MCF 10A (cell line): ENCODE measurements at regions of chr12 and their contacts with region 1.

Region 1: GRCh38 chr12:6851921-6852650 is at the start of gene USP5:
- DNase-seq: peak; percentile 100
- H3K4me3 Mint-ChIP-seq: peak within 1 kb of the TSS; percentile 88
- H3K27ac Mint-ChIP-seq: peak within 1 kb of the TSS; percentile 90
- H3K4me1 Mint-ChIP-seq: peaks cover 31% of the 10 kb centered on the region
- H3K27me3 Mint-ChIP-seq: no peaks in the 10 kb centered on the region
- CTCF ChIP-seq: no peak
- total RNA-seq, gene USP5: 62.5 and 80.2 TPM in 2 replicates

Region 2: GRCh38 chr12:6676962-6677361 is 175.1 kb before region 1 on chr12:
- CTCF ChIA-PET with region 1: no interaction called
- POLR2A ChIA-PET with region 1: no interaction called
- intact Hi-C with region 1: no loop called
- DNase-seq: no peak
- H3K4me3 Mint-ChIP-seq: no peak overlapping the region
- H3K27ac Mint-ChIP-seq: no peak overlapping the region
- H3K4me1 Mint-ChIP-seq: no peaks in the 10 kb centered on the region
- H3K27me3 Mint-ChIP-seq: no peaks in the 10 kb centered on the region
- CTCF ChIP-seq: no peak

Region 3: DNA sequence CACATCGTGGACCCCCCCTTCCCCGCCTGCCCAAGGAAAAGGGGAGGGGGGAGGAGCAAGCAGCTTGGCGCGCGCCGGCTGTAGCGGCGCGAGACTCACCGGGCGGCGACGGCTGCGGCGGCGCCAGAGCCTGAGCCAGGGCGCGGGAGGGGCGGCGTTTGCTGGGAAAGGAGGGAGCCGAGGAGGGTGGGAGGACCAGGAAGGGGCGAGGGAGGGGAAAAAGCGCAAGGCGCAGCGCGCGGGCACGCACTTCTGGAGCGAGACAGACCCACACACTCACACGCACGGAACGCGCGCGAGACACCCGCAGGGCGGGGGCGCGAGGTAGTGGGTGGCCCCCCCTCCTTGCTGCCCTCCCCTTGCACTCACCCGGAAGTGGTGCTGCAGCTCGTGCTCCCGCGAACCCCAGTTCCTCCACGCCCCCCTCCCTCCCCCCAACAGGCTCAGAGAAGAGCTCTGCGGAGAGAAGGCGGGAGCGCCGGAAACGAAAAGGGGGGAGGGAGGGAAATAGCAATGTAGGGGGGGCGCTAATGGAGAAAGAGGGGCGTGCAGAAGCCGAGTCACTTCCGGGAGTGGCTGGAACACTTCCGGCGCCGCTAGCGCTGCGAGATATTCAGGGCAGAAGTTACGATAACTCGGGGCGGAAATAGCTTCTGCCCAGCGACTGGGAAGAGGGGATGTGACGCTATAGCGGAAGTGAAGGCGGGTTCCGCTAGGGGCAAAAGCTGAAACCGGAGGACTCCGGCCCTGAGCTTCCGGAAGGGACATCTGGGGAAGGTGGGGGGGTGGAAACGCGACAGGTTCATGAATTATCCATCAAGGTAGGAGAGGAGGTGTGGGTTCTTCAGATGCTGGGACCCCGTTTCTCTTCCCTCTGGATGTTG is 162.8 kb before region 1 on chr12 and contains the start of gene ZNF384:
- CTCF ChIA-PET with region 1: no interaction called
- POLR2A ChIA-PET with region 1: interaction called, 25 read pairs
- intact Hi-C with region 1: no loop called
- DNase-seq: peak; percentile 99
- H3K4me3 Mint-ChIP-seq: peak within 1 kb of the TSS; percentile 98
- H3K27ac Mint-ChIP-seq: peak within 1 kb of the TSS; percentile 99
- H3K4me1 Mint-ChIP-seq: peaks cover 22% of the 10 kb centered on the region
- H3K27me3 Mint-ChIP-seq: peaks cover 3% of the 10 kb centered on the region
- CTCF ChIP-seq: no peak
- total RNA-seq, gene ZNF384: 62.8 and 70.8 TPM in 2 replicates

Region 4: GRCh38 chr12:6699989-6700645 is 152.0 kb before region 1 on chr12:
- CTCF ChIA-PET with region 1: no interaction called
- POLR2A ChIA-PET with region 1: no interaction called
- intact Hi-C with region 1: no loop called
- DNase-seq: no peak
- H3K4me3 Mint-ChIP-seq: peak overlapping the region; percentile 57
- H3K27ac Mint-ChIP-seq: no peak overlapping the region
- H3K4me1 Mint-ChIP-seq: peaks cover 8% of the 10 kb centered on the region
- H3K27me3 Mint-ChIP-seq: peaks cover 72% of the 10 kb centered on the region
- CTCF ChIP-seq: no peak

Region 5: GRCh38 chr12:6764011-6764828 is 87.9 kb before region 1 on chr12:
- CTCF ChIA-PET with region 1: interaction called, 6 read pairs
- POLR2A ChIA-PET with region 1: interaction called, 10 read pairs
- intact Hi-C with region 1: no loop called
- DNase-seq: peak; percentile 99
- H3K4me3 Mint-ChIP-seq: peak overlapping the region; percentile 84
- H3K27ac Mint-ChIP-seq: peak overlapping the region; percentile 95
- H3K4me1 Mint-ChIP-seq: peaks cover 42% of the 10 kb centered on the region
- H3K27me3 Mint-ChIP-seq: no peaks in the 10 kb centered on the region
- CTCF ChIP-seq: no peak

Region 6: GRCh38 chr12:6807170-6807569 is 44.9 kb before region 1 on chr12:
- CTCF ChIA-PET with region 1: no interaction called
- POLR2A ChIA-PET with region 1: no interaction called
- intact Hi-C with region 1: no loop called
- DNase-seq: no peak
- H3K4me3 Mint-ChIP-seq: no peak overlapping the region
- H3K27ac Mint-ChIP-seq: no peak overlapping the region
- H3K4me1 Mint-ChIP-seq: no peaks in the 10 kb centered on the region
- H3K27me3 Mint-ChIP-seq: peaks cover 25% of the 10 kb centered on the region
- CTCF ChIP-seq: no peak

Region 7: DNA sequence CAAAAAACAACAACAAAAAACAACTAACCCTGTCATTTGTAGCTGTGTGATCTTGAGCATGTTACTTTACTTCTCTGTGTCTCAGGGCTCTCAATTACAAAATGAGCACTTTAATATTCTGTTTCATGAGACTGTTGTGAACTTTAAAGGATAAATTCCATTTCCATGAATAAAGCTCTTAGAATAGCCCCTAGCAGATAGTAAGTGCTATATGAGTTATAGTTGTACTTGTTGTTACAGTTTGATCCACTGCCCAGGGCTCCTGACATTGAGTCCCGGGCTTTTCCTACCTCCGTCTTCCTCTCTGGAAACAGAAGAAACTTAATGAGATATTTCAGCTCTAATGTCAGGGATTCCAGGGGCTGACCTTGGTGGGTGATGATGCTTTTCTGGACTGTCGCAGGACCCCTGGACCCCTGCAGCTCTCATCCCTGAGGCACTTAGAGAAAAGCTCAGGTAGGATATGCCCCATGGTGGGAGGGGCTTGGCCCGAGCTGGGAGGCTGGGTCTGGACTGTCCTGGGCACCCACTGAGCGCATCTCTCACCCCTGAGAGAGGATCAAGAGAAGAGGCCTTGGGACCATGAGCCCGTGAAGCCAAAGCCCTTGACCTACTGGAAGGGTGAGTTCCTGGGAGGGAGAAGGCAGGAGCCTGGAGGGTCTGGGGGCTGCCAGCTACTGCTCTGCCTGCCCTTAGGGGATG is 18.7 kb before region 1 on chr12:
- CTCF ChIA-PET with region 1: interaction called, 40 read pairs
- POLR2A ChIA-PET with region 1: interaction called, 9 read pairs
- intact Hi-C with region 1: no loop called
- DNase-seq: no peak
- H3K4me3 Mint-ChIP-seq: no peak overlapping the region
- H3K27ac Mint-ChIP-seq: no peak overlapping the region
- H3K4me1 Mint-ChIP-seq: peaks cover 7% of the 10 kb centered on the region
- H3K27me3 Mint-ChIP-seq: peaks cover 37% of the 10 kb centered on the region
- CTCF ChIP-seq: no peak

Region 8: DNA sequence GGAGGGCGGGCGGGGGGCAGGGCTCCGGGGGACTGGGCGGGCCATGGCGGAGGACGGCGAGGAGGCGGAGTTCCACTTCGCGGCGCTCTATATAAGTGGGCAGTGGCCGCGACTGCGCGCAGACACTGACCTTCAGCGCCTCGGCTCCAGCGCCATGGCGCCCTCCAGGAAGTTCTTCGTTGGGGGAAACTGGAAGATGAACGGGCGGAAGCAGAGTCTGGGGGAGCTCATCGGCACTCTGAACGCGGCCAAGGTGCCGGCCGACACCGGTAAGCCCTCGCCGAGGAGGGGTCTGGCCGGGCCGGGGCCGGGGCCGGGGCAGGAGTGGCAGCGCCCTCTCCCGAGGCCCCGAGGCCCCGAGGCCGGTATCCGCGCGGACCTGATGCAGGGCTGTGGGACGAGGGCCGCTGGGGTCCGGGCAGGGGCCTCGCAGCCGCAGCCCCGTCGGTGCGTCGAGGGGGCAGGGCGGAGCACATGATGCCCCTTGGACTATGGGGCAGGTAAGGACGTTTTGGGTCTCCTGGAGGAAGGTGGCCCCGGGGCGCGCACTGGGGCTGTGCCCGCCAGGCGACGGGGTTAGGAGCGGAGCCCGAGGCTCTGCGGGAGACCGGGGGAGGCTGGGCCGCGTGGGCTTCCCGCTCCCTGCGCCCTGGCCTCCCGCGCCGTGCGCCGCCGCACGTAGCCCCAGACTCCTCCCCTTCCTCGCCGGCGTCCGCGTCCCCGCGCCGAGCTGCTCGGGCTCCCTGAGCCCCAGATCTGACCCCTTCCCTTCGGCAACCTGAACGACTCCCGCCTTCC is 15.5 kb after region 1 on chr12 and contains the start of gene TPI1:
- CTCF ChIA-PET with region 1: interaction called, 40 read pairs
- POLR2A ChIA-PET with region 1: interaction called, 130 read pairs
- intact Hi-C with region 1: no loop called
- DNase-seq: peak; percentile 70
- H3K4me3 Mint-ChIP-seq: peak within 1 kb of the TSS; percentile 86
- H3K27ac Mint-ChIP-seq: peak within 1 kb of the TSS; percentile 82
- H3K4me1 Mint-ChIP-seq: peaks cover 30% of the 10 kb centered on the region
- H3K27me3 Mint-ChIP-seq: no peaks in the 10 kb centered on the region
- CTCF ChIP-seq: no peak
- total RNA-seq, gene TPI1: 498 and 549 TPM in 2 replicates

Region 9: DNA sequence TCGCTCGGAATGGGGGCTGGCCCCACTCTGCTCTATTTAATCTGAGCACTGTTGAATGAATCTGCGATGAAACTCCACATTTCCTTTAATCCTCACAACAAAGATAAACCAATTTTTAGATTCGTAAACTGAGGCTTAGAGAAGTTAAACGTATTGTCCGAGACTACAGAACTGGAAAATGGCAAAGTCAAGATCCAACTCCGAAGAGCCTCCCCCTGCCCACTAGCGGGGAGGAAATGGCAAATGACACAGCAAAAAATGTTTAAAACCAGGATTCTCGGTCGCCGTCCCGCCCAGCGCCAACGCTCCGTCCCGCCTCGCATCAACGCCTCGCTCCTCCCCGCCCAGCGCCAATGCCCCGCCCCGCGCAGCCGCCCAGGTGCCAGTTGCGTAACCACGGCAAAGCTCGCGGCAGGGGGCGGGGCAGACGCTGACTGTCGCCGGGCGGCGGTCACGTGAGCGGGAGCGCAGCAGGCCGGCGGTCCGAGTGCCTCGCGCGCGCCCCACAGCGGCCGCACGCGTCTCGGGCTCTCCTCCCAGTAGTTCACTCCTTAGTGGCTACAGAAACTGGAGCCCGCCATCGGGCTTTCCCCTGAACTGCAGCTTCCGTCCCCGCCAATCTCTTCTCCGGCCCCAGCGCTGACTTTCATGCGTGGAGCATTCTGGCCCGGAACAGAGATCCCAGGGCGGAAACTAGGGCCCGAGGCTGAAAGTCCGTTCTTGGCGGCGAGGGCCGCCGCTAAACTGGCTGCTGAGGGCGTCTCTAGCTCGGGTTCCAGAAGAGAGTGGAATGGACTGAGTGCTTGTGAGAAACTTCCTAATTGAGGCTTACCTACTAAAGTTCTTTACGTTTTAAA is 38.9 kb after region 1 on chr12:
- CTCF ChIA-PET with region 1: interaction called, 6 read pairs
- POLR2A ChIA-PET with region 1: interaction called, 15 read pairs
- intact Hi-C with region 1: loop called (anchors 1 kb)
- DNase-seq: peak; percentile 93
- H3K4me3 Mint-ChIP-seq: peak overlapping the region; percentile 67
- H3K27ac Mint-ChIP-seq: peak overlapping the region; percentile 74
- H3K4me1 Mint-ChIP-seq: no peaks in the 10 kb centered on the region
- H3K27me3 Mint-ChIP-seq: no peaks in the 10 kb centered on the region
- CTCF ChIP-seq: peak; percentile 60

Region 10: DNA sequence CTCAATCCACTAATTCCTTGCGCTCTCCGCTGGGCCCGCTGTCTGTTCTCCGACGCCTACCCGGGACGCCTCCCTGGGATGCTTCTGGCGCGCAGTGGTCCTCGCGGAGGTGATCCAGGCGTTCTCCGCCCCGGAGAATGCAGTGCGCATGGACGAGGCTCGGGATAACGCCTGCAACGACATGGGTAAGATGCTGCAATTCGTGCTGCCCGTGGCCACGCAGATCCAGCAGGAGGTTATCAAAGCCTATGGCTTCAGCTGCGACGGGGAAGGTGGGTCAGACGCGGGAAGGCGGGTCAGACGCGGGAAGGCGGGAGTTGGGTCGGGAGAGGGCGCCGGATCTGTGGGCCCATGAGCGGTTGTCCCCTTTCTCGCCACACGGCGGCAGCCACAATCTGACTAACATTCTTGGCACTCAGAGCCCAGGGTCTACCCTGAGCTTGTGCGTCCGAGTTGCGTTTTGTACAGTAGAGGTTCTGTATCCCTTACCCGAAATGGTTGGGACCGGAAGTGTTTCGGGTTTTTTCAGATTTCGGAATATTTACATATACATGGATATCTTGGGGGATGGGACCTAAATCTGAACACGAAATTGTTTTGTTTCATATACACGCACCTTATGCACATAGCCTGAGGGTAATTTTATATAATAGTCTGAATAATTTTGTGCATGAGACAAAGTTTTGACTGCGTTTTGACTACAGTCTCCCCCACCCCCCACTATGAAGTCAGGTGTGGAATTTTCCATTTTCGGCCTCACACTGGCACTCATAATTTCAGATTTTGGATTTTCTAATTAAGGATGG is 92.5 kb after region 1 on chr12:
- CTCF ChIA-PET with region 1: interaction called, 3 read pairs
- POLR2A ChIA-PET with region 1: interaction called, 14 read pairs
- intact Hi-C with region 1: no loop called
- DNase-seq: peak; percentile 96
- H3K4me3 Mint-ChIP-seq: peak overlapping the region; percentile 85
- H3K27ac Mint-ChIP-seq: peak overlapping the region; percentile 98
- H3K4me1 Mint-ChIP-seq: peaks cover 32% of the 10 kb centered on the region
- H3K27me3 Mint-ChIP-seq: no peaks in the 10 kb centered on the region
- CTCF ChIP-seq: peak; percentile 63